Body of pancreas (tissue), 4 donors: ENCODE measurements at regions of chr2 and their contacts with region 1.

Region 1: GRCh38 chr2:225660262-225661131 is 261.0 kb downstream of the NYAP2 start:
- DNase-seq: peak; percentile 80 to 88 (median 82)
- ATAC-seq: peak; percentile 80
- H3K4me3 ChIP-seq: no peak overlapping the region
- H3K27ac ChIP-seq: no peak overlapping the region
- H3K4me1 ChIP-seq: no peaks in the 10 kb centered on the region
- H3K27me3 ChIP-seq: no peaks in the 10 kb centered on the region
- CTCF ChIP-seq: peak; percentile 55 to 90 (median 88)
- POLR2A ChIP-seq: no peak

Region 2: GRCh38 chr2:225122583-225123486 is 537.7 kb before region 1 on chr2:
- intact Hi-C with region 1: loop called (anchors 5 kb)
- DNase-seq: peak in 3 of 4 donors; percentile 15 to 39 (median 31)
- ATAC-seq: no peak
- H3K4me3 ChIP-seq: no peak overlapping the region
- H3K27ac ChIP-seq: no peak overlapping the region
- H3K4me1 ChIP-seq: peaks cover 11% of the 10 kb centered on the region
- H3K27me3 ChIP-seq: no peaks in the 10 kb centered on the region
- CTCF ChIP-seq: peak; percentile 22 to 60 (median 48)
- POLR2A ChIP-seq: no peak

Region 3: GRCh38 chr2:225282858-225283710 is 377.4 kb before region 1 on chr2:
- intact Hi-C with region 1: loop called (anchors 5 kb)
- DNase-seq: peak; percentile 23 to 42 (median 29)
- ATAC-seq: peak; percentile 35
- H3K4me3 ChIP-seq: no peak overlapping the region
- H3K27ac ChIP-seq: no peak overlapping the region
- H3K4me1 ChIP-seq: no peaks in the 10 kb centered on the region
- H3K27me3 ChIP-seq: no peaks in the 10 kb centered on the region
- CTCF ChIP-seq: peak; percentile 60 to 86 (median 77)
- POLR2A ChIP-seq: no peak

Region 4: GRCh38 chr2:225438248-225438647 is 222.2 kb before region 1 on chr2:
- intact Hi-C with region 1: no loop called
- DNase-seq: no peak
- ATAC-seq: no peak
- H3K4me3 ChIP-seq: no peak overlapping the region
- H3K27ac ChIP-seq: no peak overlapping the region
- H3K4me1 ChIP-seq: no peaks in the 10 kb centered on the region
- H3K27me3 ChIP-seq: no peaks in the 10 kb centered on the region
- CTCF ChIP-seq: no peak
- POLR2A ChIP-seq: no peak

Region 5: DNA sequence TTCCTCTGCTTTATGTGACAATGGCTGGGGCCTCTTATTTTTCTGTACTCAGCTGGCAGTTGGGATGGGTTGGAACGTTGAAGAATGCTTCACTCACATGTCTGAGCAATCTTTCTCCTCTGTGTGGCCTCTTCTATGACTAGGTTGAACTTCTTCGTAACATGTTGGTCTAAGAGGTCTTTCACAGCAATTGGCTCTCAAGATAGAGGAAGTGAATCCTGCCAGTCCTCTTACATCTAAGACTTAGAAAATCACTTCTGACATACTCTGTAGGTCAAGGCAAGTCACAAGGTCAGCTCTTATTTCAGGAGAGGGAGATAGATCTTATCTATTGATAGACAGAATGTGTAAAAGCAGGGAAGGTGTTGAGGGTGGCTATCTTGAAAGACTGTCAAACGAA is 86.9 kb before region 1 on chr2:
- intact Hi-C with region 1: no loop called
- DNase-seq: no peak
- ATAC-seq: no peak
- H3K4me3 ChIP-seq: no peak overlapping the region
- H3K27ac ChIP-seq: no peak overlapping the region
- H3K4me1 ChIP-seq: no peaks in the 10 kb centered on the region
- H3K27me3 ChIP-seq: no peaks in the 10 kb centered on the region
- CTCF ChIP-seq: no peak
- POLR2A ChIP-seq: no peak

Region 6: DNA sequence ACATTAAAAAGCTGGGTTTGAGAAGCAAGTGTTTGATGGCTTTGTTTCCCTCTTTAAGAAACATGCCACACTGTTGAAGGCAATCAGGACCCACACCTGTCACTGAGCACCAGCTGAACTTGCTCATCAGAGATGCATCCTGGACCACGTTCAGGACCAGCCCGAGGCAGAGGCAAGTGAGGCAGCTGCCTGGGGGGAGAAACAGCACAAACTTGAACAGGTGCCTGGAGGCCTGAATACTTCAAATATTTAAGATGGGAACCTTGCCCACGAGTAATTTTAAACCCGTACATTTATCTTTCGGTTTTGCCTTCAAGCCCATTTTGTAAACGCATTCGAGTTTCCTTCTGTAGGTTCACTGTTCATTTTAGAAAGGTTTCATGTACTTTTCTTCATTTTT is 160.3 kb after region 1 on chr2:
- intact Hi-C with region 1: no loop called
- DNase-seq: no peak
- ATAC-seq: no peak
- H3K4me3 ChIP-seq: no peak overlapping the region
- H3K27ac ChIP-seq: no peak overlapping the region
- H3K4me1 ChIP-seq: no peaks in the 10 kb centered on the region
- H3K27me3 ChIP-seq: no peaks in the 10 kb centered on the region
- CTCF ChIP-seq: no peak
- POLR2A ChIP-seq: no peak

Region 7: DNA sequence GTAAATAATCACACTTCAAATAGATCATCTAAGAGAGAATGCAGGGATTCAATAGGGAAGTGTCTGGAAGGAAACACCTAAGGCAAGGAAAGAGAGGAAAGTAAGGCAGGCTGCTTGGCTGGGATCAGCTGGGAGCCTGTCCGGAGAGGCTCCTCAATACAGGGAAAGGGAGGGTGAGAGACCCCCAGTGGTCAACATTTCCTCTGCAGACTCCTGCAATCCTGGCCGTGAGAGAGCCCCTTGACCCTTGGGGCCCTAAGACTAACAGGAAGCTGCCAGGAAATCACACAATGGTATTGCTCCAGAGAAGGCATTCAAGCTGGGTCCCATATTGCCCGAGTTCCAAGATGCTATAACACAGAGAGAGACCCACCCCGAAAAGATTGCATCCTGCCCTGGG is 288.4 kb after region 1 on chr2:
- intact Hi-C with region 1: no loop called
- DNase-seq: no peak
- ATAC-seq: no peak
- H3K4me3 ChIP-seq: no peak overlapping the region
- H3K27ac ChIP-seq: no peak overlapping the region
- H3K4me1 ChIP-seq: no peaks in the 10 kb centered on the region
- H3K27me3 ChIP-seq: no peaks in the 10 kb centered on the region
- CTCF ChIP-seq: no peak
- POLR2A ChIP-seq: no peak

Region 8: GRCh38 chr2:226984750-226985582 is 1324.5 kb after region 1 on chr2:
- intact Hi-C with region 1: loop called (anchors 10 kb)
- DNase-seq: peak; percentile 37 to 62 (median 38)
- ATAC-seq: peak; percentile 73
- H3K4me3 ChIP-seq: no peak overlapping the region
- H3K27ac ChIP-seq: no peak overlapping the region
- H3K4me1 ChIP-seq: peaks cover 5% of the 10 kb centered on the region
- H3K27me3 ChIP-seq: no peaks in the 10 kb centered on the region
- CTCF ChIP-seq: peak; percentile 39 to 87 (median 66)
- POLR2A ChIP-seq: no peak